ENCODE measurements at regions of chr7 and their contacts with region 1.

Region 1: DNA sequence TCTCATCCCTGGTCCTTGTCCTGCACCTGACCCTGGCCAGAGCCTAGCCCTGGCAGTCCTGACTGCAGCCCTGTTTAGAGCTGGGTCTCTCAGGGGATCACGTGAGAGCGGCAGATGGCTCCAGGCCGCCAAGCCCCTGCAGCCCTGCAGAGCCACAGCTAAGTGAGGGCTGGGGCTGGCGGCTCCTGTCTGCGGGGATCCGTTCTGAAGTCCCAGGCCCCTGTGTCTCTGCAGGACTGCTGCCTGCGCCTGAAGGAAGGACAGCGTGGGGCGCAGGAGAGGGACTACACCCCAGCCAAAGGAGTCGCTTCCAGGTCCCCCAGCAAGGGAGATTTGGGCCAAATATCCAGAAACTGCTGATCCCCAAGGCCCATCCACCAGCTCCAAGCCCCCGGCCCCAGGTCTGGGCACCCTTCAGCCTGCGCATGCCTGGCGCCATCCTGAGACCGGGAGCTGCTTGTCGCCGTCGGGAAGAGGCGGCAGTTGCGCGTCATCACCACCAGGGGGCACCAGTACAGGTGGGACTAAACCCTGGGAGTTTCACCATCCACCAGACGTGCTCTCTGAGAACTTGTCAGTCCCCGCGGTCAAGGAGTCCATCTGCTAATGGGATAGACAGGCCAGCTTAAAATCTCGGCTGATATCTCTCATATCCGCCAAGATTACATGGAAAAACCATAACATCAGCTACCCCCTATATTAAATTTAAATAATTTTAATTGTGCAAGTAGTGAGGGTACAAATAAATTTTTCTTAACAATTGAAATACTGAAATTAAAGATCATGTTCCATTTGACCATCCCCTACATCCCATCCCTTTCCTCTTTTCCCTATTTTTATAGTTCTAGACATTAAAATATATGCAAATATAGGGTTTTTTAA is 25.1 kb upstream of the GHRHR start:
- DNase-seq: peak; percentile 32
- H3K4me3 ChIP-seq: no peak overlapping the region; the same call in 1 of the 2 replicates
- H3K27ac ChIP-seq: no peak overlapping the region
- H3K27me3 ChIP-seq: peaks cover 25% of the 10 kb centered on the region
- CTCF ChIP-seq: peak; percentile 97

Region 2: DNA sequence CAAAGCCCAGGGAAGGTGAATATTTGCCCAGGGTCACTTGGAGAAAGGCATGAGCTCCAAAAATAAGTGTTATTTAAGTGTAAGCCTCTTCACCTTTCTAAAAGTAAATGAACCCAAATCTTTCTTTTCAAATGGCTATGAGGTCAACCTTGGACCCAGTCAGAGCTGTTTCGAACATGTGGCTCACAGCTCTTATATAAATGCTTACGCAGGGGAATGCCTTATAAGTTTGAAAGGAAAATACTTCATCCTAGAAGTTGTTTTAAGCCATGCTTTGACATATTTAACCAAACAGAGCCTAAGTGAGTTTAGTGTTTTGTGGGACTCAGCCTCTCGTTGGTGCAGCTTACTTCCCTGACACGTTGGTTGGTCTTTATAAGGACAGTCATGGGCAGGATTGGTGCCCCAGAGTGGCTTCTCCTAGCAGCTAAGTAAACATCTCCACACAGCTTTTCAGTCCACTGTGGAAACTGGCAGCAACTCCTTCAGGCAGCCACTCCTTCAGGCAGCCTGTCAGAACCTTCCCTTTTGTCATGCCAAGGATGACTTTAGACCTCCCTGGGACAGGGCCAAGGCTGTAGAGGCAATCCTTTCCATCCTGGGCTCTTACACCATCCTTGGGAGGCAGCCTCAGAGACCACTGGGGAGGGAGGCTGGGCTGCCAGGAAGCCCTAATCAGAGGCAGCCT is 123.8 kb before region 1 on chr7:
- CTCF ChIA-PET with region 1: interaction called, 16 read pairs
- POLR2A ChIA-PET with region 1: no interaction called
- DNase-seq: no peak
- H3K4me3 ChIP-seq: no peak overlapping the region
- H3K27ac ChIP-seq: no peak overlapping the region
- H3K27me3 ChIP-seq: no peaks in the 10 kb centered on the region
- CTCF ChIP-seq: no peak

Region 3: GRCh38 chr7:30920584-30921539 is 17.8 kb before region 1 on chr7:
- CTCF ChIA-PET with region 1: interaction called, 15 read pairs
- POLR2A ChIA-PET with region 1: no interaction called
- DNase-seq: no peak
- H3K4me3 ChIP-seq: no peak overlapping the region
- H3K27ac ChIP-seq: no peak overlapping the region
- H3K27me3 ChIP-seq: no peaks in the 10 kb centered on the region
- CTCF ChIP-seq: no peak

Region 4: DNA sequence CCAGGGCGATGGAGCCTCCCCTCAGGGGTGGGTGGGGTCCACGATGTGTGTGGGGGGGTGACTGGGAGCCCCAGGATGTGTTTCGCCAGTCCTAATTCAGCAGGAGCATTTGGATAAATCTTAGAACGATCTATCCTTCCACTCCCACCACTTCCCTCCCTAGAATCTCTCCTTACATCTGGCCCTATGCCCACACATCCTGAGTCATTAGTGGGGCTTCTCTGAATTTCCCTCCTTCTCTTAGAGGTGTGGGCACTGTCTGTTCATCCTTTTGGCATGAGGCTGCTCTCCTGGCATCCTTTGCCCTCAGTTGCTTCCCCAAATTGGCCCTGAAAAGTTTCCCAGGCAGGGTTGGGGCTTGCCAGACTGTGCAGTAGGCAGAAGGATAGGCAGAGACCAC is 26.7 kb after region 1 on chr7:
- CTCF ChIA-PET with region 1: interaction called, 27 read pairs
- POLR2A ChIA-PET with region 1: no interaction called
- DNase-seq: no peak
- H3K4me3 ChIP-seq: no peak overlapping the region
- H3K27ac ChIP-seq: no peak overlapping the region
- H3K27me3 ChIP-seq: peaks cover 8% of the 10 kb centered on the region
- CTCF ChIP-seq: no peak

Region 5: GRCh38 chr7:30983042-30983913 is 44.6 kb after region 1 on chr7:
- CTCF ChIA-PET with region 1: interaction called, 21 read pairs
- POLR2A ChIA-PET with region 1: no interaction called
- DNase-seq: peak; percentile 53
- H3K4me3 ChIP-seq: no peak overlapping the region
- H3K27ac ChIP-seq: no peak overlapping the region
- H3K27me3 ChIP-seq: peaks cover 21% of the 10 kb centered on the region
- CTCF ChIP-seq: peak; percentile 91

Measured in AG04450 (cell line).